ENCODE measurements at regions of chr12 and their contacts with region 1.

Region 1: GRCh38 chr12:21509768-21510167 is 8.2 kb downstream of the GOLT1B start:
- DNase-seq: no peak
- H3K4me3 Mint-ChIP-seq: no peak overlapping the region
- H3K27ac Mint-ChIP-seq: peak overlapping the region; percentile 53
- H3K4me1 Mint-ChIP-seq: peaks cover 34% of the 10 kb centered on the region
- H3K27me3 Mint-ChIP-seq: no peaks in the 10 kb centered on the region

Region 2: GRCh38 chr12:21324551-21324950 is 185.2 kb before region 1 on chr12:
- CTCF ChIA-PET with region 1: no interaction called
- POLR2A ChIA-PET with region 1: no interaction called
- intact Hi-C with region 1: no loop called
- DNase-seq: no peak
- H3K4me3 Mint-ChIP-seq: no peak overlapping the region
- H3K27ac Mint-ChIP-seq: no peak overlapping the region
- H3K4me1 Mint-ChIP-seq: no peaks in the 10 kb centered on the region
- H3K27me3 Mint-ChIP-seq: no peaks in the 10 kb centered on the region

Region 3: DNA sequence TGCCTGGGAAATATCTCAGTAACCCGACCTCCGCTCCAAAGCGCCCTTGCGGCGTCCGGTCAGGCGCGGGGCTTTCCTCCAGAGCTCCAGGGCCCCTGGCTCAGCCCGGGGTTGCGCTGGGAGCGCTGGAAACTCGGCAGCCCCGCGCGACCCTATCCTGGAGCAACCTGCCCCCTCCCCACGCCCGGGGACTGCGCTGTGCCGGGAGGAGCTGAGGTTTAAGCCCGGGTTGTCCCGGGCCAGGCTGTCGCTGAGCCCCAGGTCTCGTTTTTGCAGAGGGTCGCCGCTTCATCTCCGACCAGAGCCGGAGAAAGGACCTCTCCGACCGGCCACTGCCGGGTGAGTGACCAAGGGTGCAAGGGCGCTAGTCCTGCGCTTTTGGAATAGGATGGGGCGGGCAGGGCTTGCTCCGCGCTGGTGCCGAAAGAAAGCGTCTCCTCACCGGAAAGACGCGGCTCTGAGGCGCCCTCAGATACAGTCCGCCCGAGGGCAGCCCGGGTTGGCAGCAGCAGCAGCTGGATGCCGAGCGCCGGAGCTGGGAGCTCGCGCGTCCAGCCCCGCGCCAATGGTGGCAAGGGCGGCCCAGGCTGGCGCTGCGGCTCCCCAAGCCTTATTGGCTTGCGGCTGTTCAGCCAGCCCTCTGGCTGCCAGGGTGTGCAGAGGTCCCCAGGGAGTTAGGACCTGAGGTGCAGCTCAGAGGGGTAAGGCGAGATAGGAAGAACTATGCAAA is 17.8 kb after region 1 on chr12:
- CTCF ChIA-PET with region 1: no interaction called
- POLR2A ChIA-PET with region 1: interaction called, 6 read pairs
- intact Hi-C with region 1: loop called (anchors 2 kb)
- DNase-seq: peak; percentile 78
- H3K4me3 Mint-ChIP-seq: peak overlapping the region; percentile 73
- H3K27ac Mint-ChIP-seq: no peak overlapping the region
- H3K4me1 Mint-ChIP-seq: peaks cover 6% of the 10 kb centered on the region
- H3K27me3 Mint-ChIP-seq: peaks cover 27% of the 10 kb centered on the region

Measured in activated CD4-positive, alpha-beta memory T cell treated with anti-CD3 and anti-CD28 coated beads for 36 hours (primary cell).